Left lung (tissue), 14 donors: ENCODE measurements at regions of chr1 and their contacts with region 1.

Region 1: GRCh38 chr1:27097484-27097917 is 57.4 kb downstream of the SLC9A1 start:
- DNase-seq: peak; percentile 85 to 93 (median 88)
- ATAC-seq: peak; percentile 71
- H3K4me3 ChIP-seq: no peak overlapping the region
- H3K27ac ChIP-seq: peak overlapping the region in 1 of 2 donors; percentile 70
- H3K4me1 ChIP-seq: peaks cover 27 to 43% of the 10 kb centered on the region in 2 donors
- H3K27me3 ChIP-seq: no peaks in the 10 kb centered on the region
- CTCF ChIP-seq: peak; percentile 96 to 99

Region 2: DNA sequence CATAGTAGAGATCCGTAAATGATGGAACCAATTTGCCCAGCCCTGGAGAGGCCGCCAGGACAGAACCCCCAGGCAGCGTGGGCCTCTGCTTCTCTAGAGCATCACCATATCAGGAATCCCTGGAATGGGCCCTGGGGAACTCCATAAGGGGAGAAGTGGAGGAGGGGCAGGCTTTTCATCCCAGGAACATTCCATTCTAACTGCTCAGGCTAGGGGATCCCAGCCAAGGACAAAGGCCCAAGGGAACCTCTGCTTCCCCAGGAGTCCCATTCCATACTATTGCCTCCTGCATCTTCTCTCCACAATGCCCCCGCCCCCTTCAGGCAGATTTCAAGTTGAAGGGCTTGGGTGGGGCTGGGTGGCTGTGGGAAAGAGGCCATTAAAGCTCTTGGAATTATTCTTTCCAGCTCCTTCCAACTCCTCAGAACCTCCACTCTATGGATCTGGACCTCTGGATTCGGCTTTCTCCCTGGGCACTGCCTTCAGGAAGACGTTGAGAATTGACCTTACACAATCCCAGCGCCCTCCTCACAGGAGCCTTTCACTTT is 98.0 kb before region 1 on chr1:
- intact Hi-C with region 1: loop called in 1 of 2 experiments (anchors 5 kb)
- DNase-seq: peak in 1 of 4 donors; percentile 68
- ATAC-seq: peak; percentile 39
- H3K4me3 ChIP-seq: no peak overlapping the region
- H3K27ac ChIP-seq: peak overlapping the region; percentile 35 to 48
- H3K4me1 ChIP-seq: peaks cover 27 to 59% of the 10 kb centered on the region in 2 donors
- H3K27me3 ChIP-seq: peaks cover 7 to 28% of the 10 kb centered on the region in 2 donors
- CTCF ChIP-seq: no peak

Region 3: GRCh38 chr1:27044613-27045151 is 52.8 kb before region 1 on chr1:
- intact Hi-C with region 1: loop called in 1 of 2 experiments (anchors 5 kb)
- DNase-seq: peak; percentile 72 to 96 (median 88)
- ATAC-seq: peak; percentile 99
- H3K4me3 ChIP-seq: peak overlapping the region in 1 of 2 donors; percentile 16
- H3K27ac ChIP-seq: peak overlapping the region in 1 of 2 donors; percentile 55
- H3K4me1 ChIP-seq: peaks cover 7 to 22% of the 10 kb centered on the region in 2 donors
- H3K27me3 ChIP-seq: no peaks in the 10 kb centered on the region
- CTCF ChIP-seq: peak; percentile 98 to 99

Region 4: GRCh38 chr1:27179379-27179778 is 81.9 kb after region 1 on chr1:
- intact Hi-C with region 1: no loop called
- DNase-seq: no peak
- ATAC-seq: no peak
- H3K4me3 ChIP-seq: no peak overlapping the region
- H3K27ac ChIP-seq: no peak overlapping the region
- H3K4me1 ChIP-seq: no peaks in the 10 kb centered on the region
- H3K27me3 ChIP-seq: no peaks in the 10 kb centered on the region
- CTCF ChIP-seq: no peak